ENCODE measurements at regions of chr15 and their contacts with region 1.

Region 1: GRCh38 chr15:80072285-80072994 is 13.0 kb downstream of the ZFAND6 start:
- DNase-seq: peak; percentile 14
- ATAC-seq: peak; percentile 99
- H3K4me3 Mint-ChIP-seq: peak overlapping the region; percentile 86
- H3K27ac Mint-ChIP-seq: peak overlapping the region; percentile 74
- H3K4me1 Mint-ChIP-seq: peaks cover 50% of the 10 kb centered on the region
- H3K27me3 Mint-ChIP-seq: no peaks in the 10 kb centered on the region
- CTCF ChIP-seq: no peak

Region 2: GRCh38 chr15:80058851-80059785 is 13.3 kb before region 1 on chr15 and contains the start of gene ZFAND6:
- CTCF ChIA-PET with region 1: interaction called, 7 read pairs
- POLR2A ChIA-PET with region 1: interaction called, 11 read pairs
- intact Hi-C with region 1: no loop called
- DNase-seq: peak; percentile 96
- ATAC-seq: peak; percentile 91
- H3K4me3 Mint-ChIP-seq: peak within 1 kb of the TSS; percentile 91
- H3K27ac Mint-ChIP-seq: peak within 1 kb of the TSS; percentile 92
- H3K4me1 Mint-ChIP-seq: peaks cover 25% of the 10 kb centered on the region
- H3K27me3 Mint-ChIP-seq: no peaks in the 10 kb centered on the region
- CTCF ChIP-seq: no peak
- total RNA-seq, gene ZFAND6: 29.6 to 30.7 TPM